ENCODE measurements at regions of chr13 and their contacts with region 1.

Region 1: DNA sequence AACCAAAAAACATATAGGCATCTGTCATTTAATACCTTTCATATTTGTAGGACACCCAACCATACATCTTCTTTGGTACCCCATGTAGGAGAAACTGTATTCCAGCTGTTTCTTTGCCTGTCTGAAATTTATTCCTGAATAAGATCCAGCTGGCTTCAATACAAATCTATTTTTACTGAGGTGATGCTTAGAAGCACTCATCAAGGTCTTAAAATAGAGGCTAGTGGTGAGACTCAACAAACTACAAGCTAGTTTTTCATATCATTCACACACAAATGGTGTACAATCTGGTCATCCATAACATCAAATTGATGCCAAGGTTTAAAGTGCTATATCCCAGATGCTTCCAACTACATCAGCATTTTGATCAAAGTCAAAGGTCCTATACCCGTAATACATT is 1071.3 kb upstream of the MIR17HG start:
- DNase-seq: no peak
- H3K4me3 ChIP-seq: no peak overlapping the region
- H3K27ac ChIP-seq: no peak overlapping the region
- H3K4me1 ChIP-seq: no peaks in the 10 kb centered on the region
- H3K27me3 ChIP-seq: no peaks in the 10 kb centered on the region
- CTCF ChIP-seq: no peak
- EP300 ChIP-seq: no peak
- POLR2A ChIP-seq: no peak

Region 2: GRCh38 chr13:90187478-90188350 is 88.5 kb before region 1 on chr13:
- intact Hi-C with region 1: no loop called
- DNase-seq: no peak
- H3K4me3 ChIP-seq: no peak overlapping the region
- H3K27ac ChIP-seq: no peak overlapping the region
- H3K4me1 ChIP-seq: no peaks in the 10 kb centered on the region
- H3K27me3 ChIP-seq: no peaks in the 10 kb centered on the region
- CTCF ChIP-seq: no peak
- EP300 ChIP-seq: no peak
- POLR2A ChIP-seq: no peak

Region 3: GRCh38 chr13:90230311-90230710 is 45.9 kb before region 1 on chr13:
- intact Hi-C with region 1: loop called in 1 of 4 experiments (anchors 2 kb)
- DNase-seq: no peak
- H3K4me3 ChIP-seq: no peak overlapping the region
- H3K27ac ChIP-seq: no peak overlapping the region
- H3K4me1 ChIP-seq: no peaks in the 10 kb centered on the region
- H3K27me3 ChIP-seq: no peaks in the 10 kb centered on the region
- CTCF ChIP-seq: no peak
- EP300 ChIP-seq: no peak
- POLR2A ChIP-seq: no peak

Region 4: DNA sequence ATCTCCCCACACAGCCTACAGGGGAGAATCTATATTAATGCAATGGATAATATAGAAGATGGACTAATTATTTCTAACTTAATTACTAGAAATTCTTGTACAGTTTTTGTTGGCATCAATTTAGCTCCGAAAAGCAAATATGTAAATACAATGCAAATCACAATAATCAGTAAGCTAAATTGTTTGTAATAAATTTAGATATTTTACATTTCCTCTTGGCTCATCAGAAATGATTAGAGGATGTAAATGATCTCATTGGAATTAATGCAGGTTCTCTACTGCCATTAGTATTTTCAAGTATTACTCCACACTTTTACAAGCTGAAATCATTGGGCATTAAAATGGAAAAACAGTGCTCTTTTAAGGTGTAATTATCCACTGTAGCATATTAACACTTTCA is 329.4 kb after region 1 on chr13:
- intact Hi-C with region 1: no loop called
- DNase-seq: no peak
- H3K4me3 ChIP-seq: no peak overlapping the region
- H3K27ac ChIP-seq: no peak overlapping the region
- H3K4me1 ChIP-seq: no peaks in the 10 kb centered on the region
- H3K27me3 ChIP-seq: no peaks in the 10 kb centered on the region
- CTCF ChIP-seq: no peak
- EP300 ChIP-seq: no peak
- POLR2A ChIP-seq: no peak

Region 5: GRCh38 chr13:91482427-91482826 is 1206.2 kb after region 1 on chr13:
- intact Hi-C with region 1: no loop called
- DNase-seq: no peak
- H3K4me3 ChIP-seq: no peak overlapping the region
- H3K27ac ChIP-seq: no peak overlapping the region
- H3K4me1 ChIP-seq: no peaks in the 10 kb centered on the region
- H3K27me3 ChIP-seq: no peaks in the 10 kb centered on the region
- CTCF ChIP-seq: no peak
- EP300 ChIP-seq: no peak
- POLR2A ChIP-seq: no peak

Measured in ovary (tissue), 10 donors.